Adrenal gland (tissue), 19 donors: ENCODE measurements at regions of chr3 and their contacts with region 1.

Region 1: GRCh38 chr3:4712143-4712542 is 219.0 kb downstream of the ITPR1 start:
- DNase-seq: peak in 1 of 7 donors; percentile 29
- H3K4me3 ChIP-seq: no peak overlapping the region
- H3K27ac ChIP-seq: peak overlapping the region in 2 of 5 donors; percentile 1 to 20
- H3K4me1 ChIP-seq: peaks cover 0 to 25% of the 10 kb centered on the region in 2 donors
- H3K27me3 ChIP-seq: no peaks in the 10 kb centered on the region
- CTCF ChIP-seq: no peak
- POLR2A ChIP-seq: no peak

Region 2: GRCh38 chr3:4551051-4551711 is 161.0 kb before region 1 on chr3:
- intact Hi-C with region 1: no loop called
- DNase-seq: peak; percentile 53 to 88 (median 79)
- H3K4me3 ChIP-seq: no peak overlapping the region
- H3K27ac ChIP-seq: peak overlapping the region; percentile 36 to 74 (median 68)
- H3K4me1 ChIP-seq: peaks cover 24 to 59% of the 10 kb centered on the region in 2 donors
- H3K27me3 ChIP-seq: no peaks in the 10 kb centered on the region
- CTCF ChIP-seq: no peak
- POLR2A ChIP-seq: no peak

Region 3: GRCh38 chr3:5026331-5027218 is 314.4 kb after region 1 on chr3:
- intact Hi-C with region 1: loop called (anchors 5 to 10 kb)
- DNase-seq: peak; percentile 90 to 96 (median 94)
- H3K4me3 ChIP-seq: peak overlapping the region in 2 of 4 donors; percentile 51 to 63
- H3K27ac ChIP-seq: peak overlapping the region in 4 of 5 donors; percentile 77 to 92 (median 86)
- H3K4me1 ChIP-seq: peaks cover 6 to 7% of the 10 kb centered on the region in 2 donors
- H3K27me3 ChIP-seq: no peaks in the 10 kb centered on the region
- CTCF ChIP-seq: peak; percentile 58 to 92 (median 86)
- POLR2A ChIP-seq: peak; percentile 4 to 48

Region 4: GRCh38 chr3:5041315-5041714 is 329.2 kb after region 1 on chr3:
- intact Hi-C with region 1: loop called in 1 of 2 experiments (anchors 5 kb)
- DNase-seq: no peak
- H3K4me3 ChIP-seq: no peak overlapping the region
- H3K27ac ChIP-seq: no peak overlapping the region
- H3K4me1 ChIP-seq: peaks cover 0 to 4% of the 10 kb centered on the region in 2 donors
- H3K27me3 ChIP-seq: no peaks in the 10 kb centered on the region
- CTCF ChIP-seq: no peak
- POLR2A ChIP-seq: no peak

Region 5: GRCh38 chr3:5057857-5058324 is 345.7 kb after region 1 on chr3:
- intact Hi-C with region 1: loop called (anchors 5 kb)
- DNase-seq: peak; percentile 79 to 95 (median 87)
- H3K4me3 ChIP-seq: no peak overlapping the region
- H3K27ac ChIP-seq: no peak overlapping the region
- H3K4me1 ChIP-seq: peaks cover 0 to 27% of the 10 kb centered on the region in 2 donors
- H3K27me3 ChIP-seq: no peaks in the 10 kb centered on the region
- CTCF ChIP-seq: peak; percentile 61 to 90 (median 86)
- POLR2A ChIP-seq: no peak